ENCODE measurements at regions of chr5 and their contacts with region 1.

Region 1: DNA sequence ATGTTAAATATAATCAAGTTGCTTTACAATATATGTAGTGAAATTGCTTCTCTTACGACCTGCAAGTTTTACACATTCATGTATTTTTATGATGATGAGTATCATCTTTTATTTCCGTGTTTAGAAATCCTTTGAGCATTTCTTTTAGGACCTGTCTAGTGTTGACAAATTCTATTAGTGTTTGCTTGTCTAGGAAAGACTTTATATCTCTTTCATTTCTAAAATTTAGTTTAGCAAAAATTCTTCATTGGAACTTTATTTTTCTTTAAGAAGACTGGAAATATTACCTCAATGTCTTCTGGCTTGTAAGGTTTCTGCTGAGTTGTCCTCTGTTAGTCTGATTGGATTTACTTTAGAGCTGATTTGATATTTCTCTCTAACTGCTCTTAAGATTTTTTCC is 920.9 kb upstream of the CTNND2 start:
- DNase-seq: no peak

Region 2: DNA sequence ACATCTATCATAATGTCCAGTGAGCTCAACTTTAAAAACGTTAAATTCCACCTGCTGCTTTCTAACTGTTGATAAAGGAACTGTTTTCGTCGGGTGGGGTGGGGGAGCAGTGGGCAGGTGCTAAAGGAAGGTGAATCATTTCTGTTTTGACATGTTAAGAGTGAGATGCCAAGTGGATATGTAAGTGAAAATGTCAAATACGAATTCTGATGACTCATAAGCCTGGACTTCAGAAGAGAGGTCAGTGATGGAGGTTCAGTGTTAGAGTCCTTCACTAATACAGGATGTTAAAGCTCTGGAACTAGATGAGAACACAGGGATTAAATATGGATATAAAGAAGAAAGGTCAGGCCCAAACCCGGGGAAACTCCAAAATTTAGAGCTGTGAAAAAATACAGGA is 303.0 kb before region 1 on chr5:
- intact Hi-C with region 1: no loop called
- DNase-seq: no peak

Region 3: GRCh38 chr5:12675956-12676355 is 149.2 kb before region 1 on chr5:
- intact Hi-C with region 1: no loop called
- DNase-seq: no peak

Region 4: DNA sequence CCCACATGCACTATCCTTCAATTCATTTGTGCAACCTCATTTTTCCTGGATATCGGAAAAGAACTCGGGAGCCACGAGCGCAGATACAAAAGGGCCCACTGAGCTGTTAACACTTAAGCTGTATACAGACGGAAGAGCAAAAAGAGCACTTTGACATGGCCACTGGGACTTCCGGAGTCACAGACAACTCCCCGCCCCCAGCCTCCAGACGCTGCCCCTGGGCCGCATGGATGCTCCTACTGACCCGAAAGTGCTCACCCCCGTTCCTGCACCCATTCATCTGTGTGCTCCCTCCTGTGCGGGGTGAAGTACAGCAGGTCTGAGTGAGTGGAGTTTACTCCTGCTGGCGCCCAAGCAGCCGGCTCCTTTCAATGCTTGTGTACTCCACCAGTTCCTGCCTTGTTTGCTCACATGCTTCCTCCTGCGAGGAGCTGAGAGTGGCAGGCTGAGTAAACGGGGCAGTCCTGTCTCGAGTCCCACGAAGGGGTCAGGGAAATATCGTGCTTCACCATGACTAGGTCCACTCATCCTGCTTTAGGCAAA is 19.9 kb before region 1 on chr5:
- intact Hi-C with region 1: loop called (anchors 2 kb)
- DNase-seq: no peak

Region 5: GRCh38 chr5:12865529-12865928 is 40.4 kb after region 1 on chr5:
- intact Hi-C with region 1: no loop called
- DNase-seq: no peak

Region 6: GRCh38 chr5:14483525-14484157 is 1658.5 kb after region 1 on chr5:
- intact Hi-C with region 1: no loop called
- DNase-seq: no peak

Measured in cardiac septum (tissue), 1 donor.